Tibial artery (tissue), 4 donors: ENCODE measurements at regions of chr3 and their contacts with region 1.

Region 1: GRCh38 chr3:111215481-111215880 is 143.9 kb downstream of the NECTIN3 start:
- DNase-seq: no peak
- H3K4me3 ChIP-seq: no peak overlapping the region
- H3K27ac ChIP-seq: no peak overlapping the region
- H3K4me1 ChIP-seq: peaks cover 0 to 6% (median 0%) of the 10 kb centered on the region in 4 donors
- H3K27me3 ChIP-seq: no peaks in the 10 kb centered on the region
- CTCF ChIP-seq: no peak

Region 2: GRCh38 chr3:111236836-111237713 is 21.6 kb after region 1 on chr3:
- intact Hi-C with region 1: loop called (anchors 1 kb)
- DNase-seq: no peak
- H3K4me3 ChIP-seq: no peak overlapping the region
- H3K27ac ChIP-seq: no peak overlapping the region
- H3K4me1 ChIP-seq: no peaks in the 10 kb centered on the region
- H3K27me3 ChIP-seq: no peaks in the 10 kb centered on the region
- CTCF ChIP-seq: no peak

Region 3: DNA sequence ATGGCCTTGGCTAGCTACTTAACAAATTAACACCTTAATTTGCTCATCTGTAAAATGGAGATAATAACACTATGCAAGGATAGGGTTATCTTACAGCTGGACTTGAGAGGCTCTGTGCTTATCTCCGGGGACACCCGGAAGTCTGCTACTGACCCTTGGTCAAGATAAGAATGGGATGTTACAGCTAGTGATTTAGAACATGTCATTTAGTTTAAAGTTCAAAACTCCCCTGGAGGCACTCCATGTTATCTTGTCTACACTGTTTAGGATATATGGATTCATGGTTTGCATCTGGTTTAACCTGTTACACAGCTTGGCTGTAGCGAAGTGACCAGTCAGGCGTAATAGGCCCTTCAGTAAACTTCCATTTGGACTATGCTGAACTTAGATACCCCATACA is 170.6 kb after region 1 on chr3:
- intact Hi-C with region 1: no loop called
- DNase-seq: no peak
- H3K4me3 ChIP-seq: no peak overlapping the region
- H3K27ac ChIP-seq: no peak overlapping the region
- H3K4me1 ChIP-seq: no peaks in the 10 kb centered on the region
- H3K27me3 ChIP-seq: no peaks in the 10 kb centered on the region
- CTCF ChIP-seq: no peak